ENCODE measurements at regions of chr1 and their contacts with region 1.

Region 1: DNA sequence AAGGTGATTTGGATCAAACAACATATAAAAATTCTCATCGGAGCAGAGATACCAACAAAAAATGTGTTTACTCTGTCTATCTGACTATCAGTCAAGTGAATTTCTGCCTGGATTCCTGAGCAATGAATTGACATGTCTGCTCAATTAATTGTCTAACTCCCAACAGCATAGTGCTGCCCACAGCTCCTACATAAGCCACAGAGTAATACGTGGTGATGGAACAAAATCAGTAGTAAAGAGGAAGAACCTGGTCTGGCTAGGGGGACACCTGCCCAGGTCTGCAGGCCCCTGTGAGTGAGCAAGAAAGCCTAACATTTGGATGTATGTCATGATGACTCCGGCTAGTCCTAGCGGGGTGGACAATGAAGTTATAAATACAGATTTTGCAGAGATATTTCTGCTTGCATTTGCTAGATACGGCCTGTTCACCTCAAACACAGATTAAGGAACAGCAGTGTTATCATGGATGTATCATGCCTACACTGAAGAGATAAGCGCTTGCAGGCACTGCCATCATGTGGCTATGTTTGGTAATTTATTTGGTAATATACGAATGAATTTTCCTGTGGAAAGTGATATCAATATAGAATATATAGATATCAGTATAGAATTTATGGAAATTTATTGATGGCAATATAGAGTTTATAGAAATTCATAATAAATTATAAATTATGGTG is 69.6 kb upstream of the LRRC8B start:
- DNase-seq: peak; percentile 44
- ATAC-seq: peak; percentile 88
- H3K4me3 ChIP-seq: no peak overlapping the region
- H3K27ac ChIP-seq: no peak overlapping the region
- H3K4me1 ChIP-seq: no peaks in the 10 kb centered on the region
- H3K27me3 ChIP-seq: no peaks in the 10 kb centered on the region
- CTCF ChIP-seq: peak; percentile 75
- POLR2A ChIP-seq: no peak
- RAD21 ChIP-seq: peak; percentile 80

Region 2: GRCh38 chr1:88935522-88936222 is 519.3 kb before region 1 on chr1:
- CTCF ChIA-PET with region 1: no interaction called
- POLR2A ChIA-PET with region 1: no interaction called
- dilution Hi-C with region 1: no loop called
- in situ Hi-C with region 1: no loop called
- intact Hi-C with region 1: loop called (anchors 1 kb)
- DNase-seq: peak; percentile 52
- ATAC-seq: peak; percentile 81
- H3K4me3 ChIP-seq: no peak overlapping the region
- H3K27ac ChIP-seq: no peak overlapping the region
- H3K4me1 ChIP-seq: no peaks in the 10 kb centered on the region
- H3K27me3 ChIP-seq: no peaks in the 10 kb centered on the region
- CTCF ChIP-seq: peak; percentile 60
- POLR2A ChIP-seq: no peak
- RAD21 ChIP-seq: peak; percentile 49

Region 3: DNA sequence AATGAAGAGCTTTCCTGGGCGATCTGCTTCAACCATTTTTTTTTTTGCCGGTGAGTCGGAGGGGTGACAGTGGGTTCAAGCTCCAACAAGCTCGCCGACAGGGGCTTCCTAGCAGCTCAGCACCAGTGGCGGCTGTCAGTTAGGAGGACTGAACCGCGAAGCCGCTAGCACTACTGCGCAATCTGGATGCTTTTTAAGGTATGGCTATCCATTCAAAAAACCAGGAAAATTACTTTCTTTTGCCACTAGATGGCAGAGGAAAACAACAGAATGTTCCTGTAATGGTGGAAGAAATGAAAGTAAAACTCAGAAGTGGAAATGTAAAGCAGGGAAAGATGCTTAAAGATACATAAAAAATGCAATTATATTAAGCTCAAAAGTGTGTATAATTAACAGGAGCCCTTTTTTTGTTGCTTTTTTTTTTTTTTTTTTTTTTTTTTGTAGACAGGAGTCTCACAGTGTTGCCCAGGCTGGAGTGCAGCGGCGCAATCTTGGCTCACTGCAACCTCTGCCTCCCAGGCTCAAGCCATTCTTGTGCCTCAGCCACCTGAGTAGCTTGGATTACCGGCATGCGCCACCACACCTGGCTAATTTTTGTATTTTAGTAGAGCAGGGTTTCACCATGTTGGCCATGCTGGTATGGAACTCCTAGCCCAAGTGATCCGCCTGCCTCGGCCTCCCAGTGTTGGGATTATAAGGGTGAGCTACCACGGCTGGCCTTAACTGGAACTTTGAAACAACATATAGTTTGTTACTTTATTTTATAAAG is 471.0 kb before region 1 on chr1:
- CTCF ChIA-PET with region 1: no interaction called
- POLR2A ChIA-PET with region 1: interaction called, 4 read pairs
- dilution Hi-C with region 1: no loop called
- in situ Hi-C with region 1: no loop called
- intact Hi-C with region 1: loop called (anchors 1 kb)
- DNase-seq: peak; percentile 69
- ATAC-seq: peak; percentile 44
- H3K4me3 ChIP-seq: no peak overlapping the region
- H3K27ac ChIP-seq: peak overlapping the region; percentile 62; the same call in 1 of the 2 replicates
- H3K4me1 ChIP-seq: peaks cover 13% of the 10 kb centered on the region
- H3K27me3 ChIP-seq: no peaks in the 10 kb centered on the region
- CTCF ChIP-seq: peak; percentile 72
- POLR2A ChIP-seq: no peak
- RAD21 ChIP-seq: peak; percentile 51

Region 4: DNA sequence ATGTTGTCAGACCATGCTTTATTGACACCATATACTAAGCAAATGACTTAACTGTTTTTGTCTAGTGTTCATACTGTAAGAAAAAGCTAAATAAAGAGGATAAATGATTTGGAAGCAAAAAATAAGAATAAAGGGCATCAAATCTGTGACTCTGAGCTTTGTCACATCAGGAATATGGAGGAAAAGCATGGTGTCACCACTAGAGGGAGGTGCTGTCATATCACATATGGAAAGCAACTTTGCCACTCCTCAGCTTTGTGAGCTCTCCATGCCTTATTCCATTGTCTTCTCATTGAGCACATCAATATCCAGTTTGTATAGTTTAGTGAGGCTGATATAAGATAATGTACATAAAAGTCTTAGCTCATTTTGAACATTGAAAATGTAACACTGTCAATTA is 369.2 kb before region 1 on chr1:
- CTCF ChIA-PET with region 1: interaction called, 3 read pairs
- POLR2A ChIA-PET with region 1: no interaction called
- dilution Hi-C with region 1: no loop called
- in situ Hi-C with region 1: no loop called
- intact Hi-C with region 1: loop called (anchors 1 kb)
- DNase-seq: peak; percentile 56
- ATAC-seq: peak; percentile 91
- H3K4me3 ChIP-seq: no peak overlapping the region
- H3K27ac ChIP-seq: no peak overlapping the region
- H3K4me1 ChIP-seq: no peaks in the 10 kb centered on the region
- H3K27me3 ChIP-seq: no peaks in the 10 kb centered on the region
- CTCF ChIP-seq: peak; percentile 72
- POLR2A ChIP-seq: no peak
- RAD21 ChIP-seq: peak; percentile 69

Region 5: DNA sequence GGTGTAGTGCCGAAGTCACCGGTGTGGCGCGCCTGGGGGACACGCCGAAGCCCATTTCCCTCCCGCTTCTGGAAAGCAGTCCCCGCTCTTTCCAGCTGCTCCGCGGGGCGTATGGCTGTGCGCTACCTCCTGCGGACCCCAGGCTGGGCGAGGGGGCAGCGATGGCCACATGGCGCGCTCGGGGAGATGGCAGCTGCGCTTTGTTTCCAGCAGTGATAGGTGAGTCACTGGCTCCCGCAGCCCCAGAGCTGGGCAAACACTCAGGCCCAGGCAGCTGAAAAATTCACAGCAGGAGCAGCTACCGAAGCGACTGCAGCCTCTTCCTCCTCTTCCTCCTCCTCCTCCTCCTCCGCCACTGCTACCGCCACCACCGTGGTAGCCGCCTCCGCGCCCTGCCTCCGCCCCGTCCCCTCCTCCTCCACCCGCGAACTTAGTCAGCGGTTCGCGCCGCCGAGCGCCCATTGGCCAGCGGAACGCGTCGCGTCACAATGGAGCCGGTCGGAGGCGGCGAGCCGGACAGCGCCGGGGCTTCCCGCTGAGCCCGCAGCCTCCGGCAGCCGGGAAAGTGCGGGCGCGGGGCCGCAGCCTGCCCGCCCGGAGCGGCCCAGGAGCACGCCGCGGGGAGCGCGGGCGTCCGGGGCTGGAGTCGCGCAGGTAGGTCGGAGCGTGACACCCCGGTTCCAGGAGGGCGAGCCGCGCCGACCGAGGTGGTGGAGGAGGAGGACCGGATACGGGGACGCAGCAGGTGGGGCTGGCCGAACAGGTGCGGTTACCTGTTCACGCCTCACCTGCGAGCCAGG is 69.6 kb after region 1 on chr1 and contains the start of gene LRRC8B:
- CTCF ChIA-PET with region 1: no interaction called
- POLR2A ChIA-PET with region 1: no interaction called
- dilution Hi-C with region 1: no loop called
- in situ Hi-C with region 1: no loop called
- intact Hi-C with region 1: no loop called
- DNase-seq: peak; percentile 71
- ATAC-seq: peak; percentile 99
- H3K4me3 ChIP-seq: peak within 1 kb of the TSS; percentile 62
- H3K27ac ChIP-seq: no peak within 1 kb of the TSS; the same call in 1 of the 2 replicates
- H3K4me1 ChIP-seq: peaks cover 2% of the 10 kb centered on the region; the same call in 1 of the 2 replicates
- H3K27me3 ChIP-seq: peaks cover 2% of the 10 kb centered on the region; the same call in 1 of the 2 replicates
- CTCF ChIP-seq: no peak
- POLR2A ChIP-seq: no peak
- RAD21 ChIP-seq: no peak
- total RNA-seq, gene LRRC8B: 1.4 and 1.8 TPM in 2 replicates

Region 6: GRCh38 chr1:90012305-90012704 is 557.3 kb after region 1 on chr1:
- CTCF ChIA-PET with region 1: no interaction called
- POLR2A ChIA-PET with region 1: interaction called, 12 read pairs
- dilution Hi-C with region 1: no loop called
- in situ Hi-C with region 1: no loop called
- intact Hi-C with region 1: no loop called
- DNase-seq: no peak
- ATAC-seq: no peak
- H3K4me3 ChIP-seq: no peak overlapping the region
- H3K27ac ChIP-seq: no peak overlapping the region
- H3K4me1 ChIP-seq: peaks cover 3% of the 10 kb centered on the region
- H3K27me3 ChIP-seq: no peaks in the 10 kb centered on the region
- CTCF ChIP-seq: no peak
- POLR2A ChIP-seq: no peak
- RAD21 ChIP-seq: no peak

Region 7: GRCh38 chr1:90133133-90133532 is 678.1 kb after region 1 on chr1:
- CTCF ChIA-PET with region 1: no interaction called
- POLR2A ChIA-PET with region 1: no interaction called
- dilution Hi-C with region 1: no loop called
- in situ Hi-C with region 1: no loop called
- intact Hi-C with region 1: no loop called
- DNase-seq: peak; percentile 3
- ATAC-seq: peak; percentile 32; the same call in 1 of the 2 replicates
- H3K4me3 ChIP-seq: no peak overlapping the region
- H3K27ac ChIP-seq: no peak overlapping the region
- H3K4me1 ChIP-seq: no peaks in the 10 kb centered on the region
- H3K27me3 ChIP-seq: no peaks in the 10 kb centered on the region
- CTCF ChIP-seq: peak; percentile 32
- POLR2A ChIP-seq: no peak
- RAD21 ChIP-seq: no peak